ENCODE measurements at regions of chr4 and their contacts with region 1.

Region 1: GRCh38 chr4:143773998-143774895 is 73.8 kb upstream of the FREM3 start:
- DNase-seq: peak; percentile 66 to 71
- H3K4me3 ChIP-seq: no peak overlapping the region
- H3K4me3 Mint-ChIP-seq: no peak overlapping the region
- H3K27ac Mint-ChIP-seq: no peak overlapping the region
- H3K4me1 ChIP-seq: no peaks in the 10 kb centered on the region
- H3K4me1 Mint-ChIP-seq: no peaks in the 10 kb centered on the region
- H3K27me3 ChIP-seq: no peaks in the 10 kb centered on the region
- H3K27me3 Mint-ChIP-seq: peaks cover 6% of the 10 kb centered on the region
- CTCF ChIP-seq: peak; percentile 70 to 76

Region 2: DNA sequence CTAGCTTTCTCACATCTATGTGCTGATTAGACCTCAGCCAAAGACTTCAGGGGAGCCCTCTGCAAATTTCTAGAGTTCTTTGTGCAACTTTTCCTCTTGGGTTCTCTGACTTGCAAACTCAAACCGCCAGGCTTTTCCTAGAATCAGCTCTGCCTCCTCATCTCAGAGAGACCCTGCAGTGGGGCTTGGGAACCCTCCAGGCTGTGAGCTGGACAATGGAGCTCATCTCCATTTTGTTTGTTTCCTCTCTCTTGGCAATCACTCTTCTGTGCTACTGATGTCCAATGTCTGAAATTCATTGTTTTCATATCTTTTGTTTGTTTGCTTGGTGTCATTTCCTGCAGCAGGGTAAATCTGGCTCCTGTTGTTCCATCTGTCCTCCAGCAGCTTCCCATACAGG is 211.9 kb after region 1 on chr4:
- CTCF ChIA-PET with region 1: no interaction called
- POLR2A ChIA-PET with region 1: no interaction called
- intact Hi-C with region 1: loop called (anchors 2 kb)
- DNase-seq: no peak
- H3K4me3 ChIP-seq: no peak overlapping the region
- H3K4me3 Mint-ChIP-seq: no peak overlapping the region
- H3K27ac Mint-ChIP-seq: no peak overlapping the region
- H3K4me1 ChIP-seq: no peaks in the 10 kb centered on the region
- H3K4me1 Mint-ChIP-seq: no peaks in the 10 kb centered on the region
- H3K27me3 ChIP-seq: no peaks in the 10 kb centered on the region
- H3K27me3 Mint-ChIP-seq: peaks cover 4% of the 10 kb centered on the region
- CTCF ChIP-seq: no peak

Region 3: GRCh38 chr4:144141493-144141892 is 367.2 kb after region 1 on chr4:
- CTCF ChIA-PET with region 1: no interaction called
- POLR2A ChIA-PET with region 1: no interaction called
- intact Hi-C with region 1: loop called (anchors 1 kb)
- DNase-seq: no peak
- H3K4me3 ChIP-seq: no peak overlapping the region
- H3K4me3 Mint-ChIP-seq: no peak overlapping the region
- H3K27ac Mint-ChIP-seq: no peak overlapping the region
- H3K4me1 ChIP-seq: no peaks in the 10 kb centered on the region
- H3K4me1 Mint-ChIP-seq: no peaks in the 10 kb centered on the region
- H3K27me3 ChIP-seq: no peaks in the 10 kb centered on the region
- H3K27me3 Mint-ChIP-seq: peaks cover 12% of the 10 kb centered on the region
- CTCF ChIP-seq: no peak

Measured in Caco-2 (cell line).